CD4-positive, alpha-beta T cell (primary cell): ENCODE measurements at regions of chr12 and their contacts with region 1.

Region 1: DNA sequence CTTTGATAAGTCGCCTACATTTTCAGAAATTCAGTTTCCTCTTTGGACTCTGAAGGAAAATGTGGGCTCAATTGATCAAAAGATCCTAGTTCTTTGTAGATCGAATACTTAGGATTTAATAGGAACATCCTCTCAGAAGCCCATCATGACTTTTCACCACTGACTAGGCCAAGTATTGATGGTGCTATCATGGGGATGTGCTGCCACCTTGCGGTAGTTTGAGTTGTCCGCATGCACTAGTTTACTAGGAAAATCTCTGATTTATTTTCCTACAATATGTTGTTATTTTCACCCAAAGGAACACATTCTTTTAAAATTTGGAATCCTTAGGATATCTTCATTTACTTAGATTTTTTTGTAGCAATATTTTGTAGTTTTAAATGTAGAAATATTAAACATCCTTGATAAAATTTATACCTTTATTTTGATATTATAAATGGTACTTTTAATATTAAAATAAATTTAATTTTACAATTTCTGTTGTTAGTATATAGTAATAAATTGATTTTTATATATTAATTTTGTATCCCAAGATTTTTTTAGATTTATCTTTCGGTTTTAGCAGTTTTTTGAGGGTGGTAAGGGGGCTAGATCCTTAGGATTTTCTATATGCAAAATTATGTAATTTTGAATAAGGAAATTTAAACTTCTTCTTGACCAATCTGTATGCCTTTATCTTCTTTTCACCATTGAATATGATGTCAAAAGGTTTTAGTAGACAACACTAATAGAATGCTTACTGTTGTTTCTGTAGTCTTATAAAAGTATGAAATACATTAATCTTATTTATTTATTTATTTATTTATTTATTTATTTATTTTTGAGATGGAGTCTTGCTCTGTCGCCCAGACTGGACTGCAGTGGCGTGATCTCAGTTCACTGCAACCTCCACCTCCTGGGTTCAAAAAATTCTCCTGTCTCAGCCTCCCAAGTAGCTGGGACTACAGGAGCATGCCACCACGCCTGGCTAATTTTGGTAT is 52.9 kb upstream of the OR9K2 start:
- DNase-seq: peak; percentile 67 to 91 (median 76)
- ATAC-seq: peak; percentile 49
- H3K4me3 ChIP-seq: no peak overlapping the region
- H3K4me3 Mint-ChIP-seq: no peak overlapping the region
- H3K27ac ChIP-seq: no peak overlapping the region
- H3K27ac Mint-ChIP-seq: no peak overlapping the region
- H3K4me1 ChIP-seq: no peaks in the 10 kb centered on the region
- H3K4me1 Mint-ChIP-seq: peaks cover 9% of the 10 kb centered on the region
- H3K27me3 ChIP-seq: peaks cover 0 to 14% of the 10 kb centered on the region in 2 experiments
- H3K27me3 Mint-ChIP-seq: peaks cover 40% of the 10 kb centered on the region
- CTCF ChIP-seq: peak; percentile 92

Region 2: DNA sequence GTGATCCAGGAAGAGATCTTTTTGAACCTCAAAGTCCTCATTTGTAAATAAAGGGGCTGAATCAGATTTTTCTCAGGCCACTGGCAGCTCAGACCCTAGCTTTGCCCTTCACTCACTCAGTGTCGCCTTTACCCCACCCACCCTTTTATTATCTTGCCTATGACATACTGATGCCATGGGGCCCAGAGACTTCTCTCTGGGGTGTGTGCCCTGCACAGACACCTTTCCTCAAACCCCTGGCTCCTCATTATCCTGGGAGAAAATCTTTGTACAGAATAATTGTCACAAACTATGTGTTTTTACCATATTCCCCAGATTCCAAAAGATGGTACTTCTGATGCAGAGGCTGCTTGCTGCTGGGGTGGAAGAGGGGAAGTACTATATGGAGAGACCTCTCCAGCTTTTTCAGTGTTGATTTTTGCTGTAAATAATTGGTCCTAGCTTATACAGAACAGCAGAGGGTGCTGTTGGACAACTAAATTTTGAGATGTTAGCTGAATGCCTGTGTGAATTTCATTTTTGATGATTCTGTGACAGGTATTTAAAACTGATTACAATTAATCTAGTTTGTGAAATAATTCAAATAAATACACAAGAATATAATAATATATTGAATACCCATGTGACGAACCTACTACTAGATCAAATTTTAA is 371.3 kb before region 1 on chr12:
- CTCF ChIA-PET with region 1: interaction called, 20 read pairs
- POLR2A ChIA-PET with region 1: interaction called, 3 read pairs
- intact Hi-C with region 1: loop called (anchors 1 kb)
- DNase-seq: peak in 4 of 14 experiments; percentile 34 to 80 (median 72)
- ATAC-seq: peak; percentile 55
- H3K4me3 ChIP-seq: no peak overlapping the region
- H3K4me3 Mint-ChIP-seq: no peak overlapping the region
- H3K27ac ChIP-seq: no peak overlapping the region
- H3K27ac Mint-ChIP-seq: no peak overlapping the region
- H3K4me1 ChIP-seq: no peaks in the 10 kb centered on the region
- H3K4me1 Mint-ChIP-seq: no peaks in the 10 kb centered on the region
- H3K27me3 ChIP-seq: no peaks in the 10 kb centered on the region
- H3K27me3 Mint-ChIP-seq: peaks cover 5% of the 10 kb centered on the region
- CTCF ChIP-seq: peak; percentile 66

Region 3: GRCh38 chr12:54853995-54854566 is 219.3 kb before region 1 on chr12 and contains the start of gene MUCL1:
- CTCF ChIA-PET with region 1: interaction called, 11 read pairs
- POLR2A ChIA-PET with region 1: no interaction called
- intact Hi-C with region 1: loop called (anchors 1 kb)
- DNase-seq: peak; percentile 46 to 84 (median 64)
- ATAC-seq: peak; percentile 100
- H3K4me3 ChIP-seq: no peak within 1 kb of the TSS
- H3K4me3 Mint-ChIP-seq: no peak within 1 kb of the TSS
- H3K27ac ChIP-seq: no peak within 1 kb of the TSS
- H3K27ac Mint-ChIP-seq: no peak within 1 kb of the TSS
- H3K4me1 ChIP-seq: no peaks in the 10 kb centered on the region
- H3K4me1 Mint-ChIP-seq: no peaks in the 10 kb centered on the region
- H3K27me3 ChIP-seq: no peaks in the 10 kb centered on the region
- H3K27me3 Mint-ChIP-seq: no peaks in the 10 kb centered on the region
- CTCF ChIP-seq: peak; percentile 90
- total RNA-seq, gene MUCL1: not detected

Region 4: GRCh38 chr12:54975272-54975671 is 98.1 kb before region 1 on chr12:
- CTCF ChIA-PET with region 1: interaction called, 13 read pairs
- POLR2A ChIA-PET with region 1: interaction called, 6 read pairs
- intact Hi-C with region 1: no loop called
- DNase-seq: no peak
- ATAC-seq: no peak
- H3K4me3 ChIP-seq: no peak overlapping the region
- H3K4me3 Mint-ChIP-seq: peak overlapping the region; percentile 70
- H3K27ac ChIP-seq: peak overlapping the region in 1 of 2 donors; percentile 5
- H3K27ac Mint-ChIP-seq: peak overlapping the region; percentile 100
- H3K4me1 ChIP-seq: peaks cover 62% of the 10 kb centered on the region
- H3K4me1 Mint-ChIP-seq: peaks cover 99% of the 10 kb centered on the region
- H3K27me3 ChIP-seq: no peaks in the 10 kb centered on the region
- H3K27me3 Mint-ChIP-seq: no peaks in the 10 kb centered on the region
- CTCF ChIP-seq: no peak

Region 5: DNA sequence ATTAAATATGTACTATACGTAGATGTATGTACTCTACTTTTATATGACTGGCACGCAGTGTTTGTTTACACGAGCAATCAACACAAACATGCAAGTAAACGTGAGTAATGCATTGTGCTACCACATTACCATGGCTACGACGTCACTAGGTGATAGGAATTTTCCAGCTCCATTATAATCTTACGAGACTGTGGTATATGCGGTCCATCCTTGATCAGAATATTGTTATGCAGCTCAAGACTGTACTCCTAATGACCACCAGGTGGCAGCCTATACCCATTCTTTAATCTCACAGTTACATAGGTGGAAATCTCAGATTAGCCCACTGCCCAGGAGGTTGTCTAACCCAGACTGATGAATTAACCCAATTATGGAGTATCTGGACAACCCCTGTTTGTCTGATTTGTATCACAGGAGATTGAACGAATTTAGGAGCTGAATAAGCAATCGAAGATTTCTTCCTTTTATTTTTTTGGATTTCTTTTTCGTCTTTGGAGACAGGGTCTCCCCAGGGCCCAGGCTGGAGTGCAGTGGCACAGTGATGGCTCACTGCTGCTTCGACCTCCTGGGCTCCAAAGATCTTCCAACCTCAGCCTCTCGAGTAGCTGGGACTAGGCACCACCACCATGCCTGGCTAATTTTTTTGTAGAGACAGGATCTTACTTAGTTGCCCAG is 80.0 kb before region 1 on chr12:
- CTCF ChIA-PET with region 1: interaction called, 182 read pairs
- POLR2A ChIA-PET with region 1: interaction called, 54 read pairs
- intact Hi-C with region 1: loop called (anchors 1 kb)
- DNase-seq: peak in 13 of 14 experiments; percentile 34 to 91 (median 45)
- ATAC-seq: peak; percentile 77
- H3K4me3 ChIP-seq: no peak overlapping the region
- H3K4me3 Mint-ChIP-seq: peak overlapping the region; percentile 22
- H3K27ac ChIP-seq: no peak overlapping the region
- H3K27ac Mint-ChIP-seq: peak overlapping the region; percentile 100
- H3K4me1 ChIP-seq: peaks cover 36% of the 10 kb centered on the region
- H3K4me1 Mint-ChIP-seq: peaks cover 49% of the 10 kb centered on the region
- H3K27me3 ChIP-seq: no peaks in the 10 kb centered on the region
- H3K27me3 Mint-ChIP-seq: no peaks in the 10 kb centered on the region
- CTCF ChIP-seq: peak; percentile 92

Region 6: GRCh38 chr12:55008944-55009585 is 64.3 kb before region 1 on chr12:
- CTCF ChIA-PET with region 1: no interaction called
- POLR2A ChIA-PET with region 1: no interaction called
- intact Hi-C with region 1: no loop called
- DNase-seq: no peak
- ATAC-seq: no peak
- H3K4me3 ChIP-seq: no peak overlapping the region
- H3K4me3 Mint-ChIP-seq: no peak overlapping the region
- H3K27ac ChIP-seq: no peak overlapping the region
- H3K27ac Mint-ChIP-seq: no peak overlapping the region
- H3K4me1 ChIP-seq: no peaks in the 10 kb centered on the region
- H3K4me1 Mint-ChIP-seq: no peaks in the 10 kb centered on the region
- H3K27me3 ChIP-seq: no peaks in the 10 kb centered on the region
- H3K27me3 Mint-ChIP-seq: peaks cover 6% of the 10 kb centered on the region
- CTCF ChIP-seq: no peak